Calu3 (cell line): ENCODE measurements at regions of chr12 and their contacts with region 1.

Region 1: DNA sequence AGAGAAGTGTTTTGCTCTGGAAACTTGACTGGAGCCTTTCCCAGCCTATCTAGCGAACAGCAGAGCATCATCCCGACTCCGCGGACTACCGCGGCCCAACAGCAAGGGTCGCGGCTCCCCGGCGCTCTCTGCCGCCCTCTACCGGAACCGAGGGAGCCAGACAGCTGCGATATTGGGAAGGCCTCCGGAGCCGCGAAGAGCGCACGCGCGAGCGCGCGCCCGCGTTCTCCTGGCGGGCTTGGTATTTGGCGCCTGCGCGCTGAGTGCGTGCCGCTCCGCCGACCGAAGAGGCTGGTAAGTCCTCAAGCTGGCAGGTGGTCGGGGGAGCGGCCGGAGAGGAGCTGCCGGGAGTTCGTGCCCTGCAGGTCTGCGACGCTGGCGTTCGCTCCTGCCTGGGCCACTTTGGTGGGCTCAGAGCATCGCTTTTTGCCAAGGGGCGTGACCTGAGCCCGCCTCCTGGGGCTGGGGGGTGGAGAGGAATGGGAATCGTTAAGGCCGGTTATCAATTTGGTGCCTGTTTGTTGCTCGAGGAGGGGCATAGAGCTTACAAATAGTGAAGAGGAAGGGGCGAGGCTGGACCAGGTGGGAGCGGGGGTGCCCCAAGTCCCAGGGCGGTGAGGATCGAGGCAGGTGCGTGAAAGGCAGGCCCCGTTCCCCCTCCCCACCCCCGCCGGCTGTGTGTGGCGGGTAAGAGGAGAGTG is at the start of gene TMEM106C:
- DNase-seq: peak; percentile 83
- H3K4me3 Mint-ChIP-seq: peak within 1 kb of the TSS; percentile 100
- H3K27ac Mint-ChIP-seq: peak within 1 kb of the TSS; percentile 85
- H3K4me1 Mint-ChIP-seq: no peaks in the 10 kb centered on the region
- H3K27me3 Mint-ChIP-seq: peaks cover 42% of the 10 kb centered on the region
- CTCF ChIP-seq: peak; percentile 75
- total RNA-seq, gene TMEM106C: 67.2 and 77.3 TPM in 2 replicates

Region 2: GRCh38 chr12:47949441-47950308 is 13.8 kb before region 1 on chr12:
- CTCF ChIA-PET with region 1: interaction called, 11 read pairs
- intact Hi-C with region 1: no loop called
- DNase-seq: peak; percentile 82
- H3K4me3 Mint-ChIP-seq: no peak overlapping the region
- H3K27ac Mint-ChIP-seq: no peak overlapping the region
- H3K4me1 Mint-ChIP-seq: peaks cover 8% of the 10 kb centered on the region
- H3K27me3 Mint-ChIP-seq: peaks cover 43% of the 10 kb centered on the region
- CTCF ChIP-seq: peak; percentile 59

Region 3: DNA sequence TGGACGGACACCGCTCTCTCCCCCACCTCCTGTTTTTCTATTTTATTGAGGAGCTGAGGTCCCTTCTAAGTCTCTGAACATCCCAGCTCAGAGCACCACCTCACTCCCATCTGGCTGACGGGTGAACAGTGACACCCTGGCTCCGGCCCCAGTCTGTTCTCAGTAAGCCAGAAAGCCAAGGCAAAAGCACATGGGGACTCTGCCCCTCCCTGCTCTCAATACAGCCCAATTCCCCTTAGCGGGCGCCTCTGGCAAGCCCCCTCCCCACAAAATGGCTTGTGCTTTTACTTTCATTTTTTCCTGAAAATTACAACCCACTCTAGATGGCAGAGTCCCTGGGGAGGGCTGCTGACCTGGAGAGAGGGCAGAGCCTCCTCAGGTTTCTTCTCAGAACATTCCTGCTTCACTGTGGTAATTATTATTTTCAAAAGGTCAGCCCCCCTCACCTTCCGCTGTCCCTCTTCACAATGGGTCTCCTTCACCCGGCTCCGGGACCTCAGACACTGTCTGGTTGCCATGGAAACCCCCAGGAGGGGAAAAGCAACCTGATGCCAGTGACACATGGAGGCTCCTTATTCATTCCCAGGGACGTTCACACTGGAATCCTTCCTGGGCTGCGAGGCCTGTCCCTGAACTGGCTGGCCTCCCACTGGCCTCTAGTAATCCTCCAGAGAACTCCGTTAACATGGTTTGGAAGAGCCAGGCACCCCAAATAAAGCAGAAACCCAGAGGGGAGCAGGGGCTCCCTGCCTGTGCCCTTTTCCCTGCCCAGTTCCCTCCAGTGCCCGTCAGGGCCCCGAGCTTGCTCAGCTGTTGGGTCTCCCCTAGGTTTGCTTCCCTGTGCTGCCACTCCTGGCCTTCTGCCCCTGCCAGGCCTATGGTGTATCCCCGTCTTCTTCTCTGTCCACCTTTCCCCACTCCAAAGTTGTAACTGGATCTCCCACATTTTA is 24.9 kb after region 1 on chr12:
- CTCF ChIA-PET with region 1: no interaction called
- intact Hi-C with region 1: no loop called
- DNase-seq: no peak
- H3K4me3 Mint-ChIP-seq: no peak overlapping the region
- H3K27ac Mint-ChIP-seq: no peak overlapping the region
- H3K4me1 Mint-ChIP-seq: no peaks in the 10 kb centered on the region
- H3K27me3 Mint-ChIP-seq: peaks cover 92% of the 10 kb centered on the region
- CTCF ChIP-seq: no peak

Region 4: GRCh38 chr12:48110691-48111315 is 147.3 kb after region 1 on chr12:
- CTCF ChIA-PET with region 1: no interaction called
- intact Hi-C with region 1: no loop called
- DNase-seq: no peak
- H3K4me3 Mint-ChIP-seq: no peak overlapping the region
- H3K27ac Mint-ChIP-seq: no peak overlapping the region
- H3K4me1 Mint-ChIP-seq: peaks cover 11% of the 10 kb centered on the region
- H3K27me3 Mint-ChIP-seq: peaks cover 21% of the 10 kb centered on the region
- CTCF ChIP-seq: no peak